H1 (cell line): ENCODE measurements at regions of chr1 and their contacts with region 1.

Region 1: GRCh38 chr1:22611530-22611947 is 24.9 kb upstream of the C1QA start:
- DNase-seq: peak; percentile 54 to 92
- H3K4me3 ChIP-seq: no peak overlapping the region
- H3K27ac ChIP-seq: no peak overlapping the region
- H3K4me1 ChIP-seq: peaks cover 0 to 6% (median 3%) of the 10 kb centered on the region in 4 experiments; a peak in 6 of 7 replicates
- H3K27me3 ChIP-seq: no peaks in the 10 kb centered on the region; a peak in 2 of 7 replicates
- CTCF ChIP-seq: no peak
- EP300 ChIP-seq: no peak
- POLR2A ChIP-seq: no peak
- RAD21 ChIP-seq: no peak; a peak in 1 of 4 replicates

Region 2: GRCh38 chr1:22621761-22622160 is 10.2 kb after region 1 on chr1:
- CTCF ChIA-PET with region 1: interaction called, 13 read pairs
- POLR2A ChIA-PET with region 1: interaction called, 6 read pairs
- DNase-seq: no peak
- H3K4me3 ChIP-seq: no peak overlapping the region
- H3K27ac ChIP-seq: no peak overlapping the region
- H3K4me1 ChIP-seq: peaks cover 0 to 15% (median 9%) of the 10 kb centered on the region in 4 experiments; a peak in 5 of 7 replicates
- H3K27me3 ChIP-seq: no peaks in the 10 kb centered on the region
- CTCF ChIP-seq: no peak
- EP300 ChIP-seq: no peak
- POLR2A ChIP-seq: no peak
- RAD21 ChIP-seq: peak in 1 of 2 experiments; percentile 9; a peak in 1 of 4 replicates

Region 3: DNA sequence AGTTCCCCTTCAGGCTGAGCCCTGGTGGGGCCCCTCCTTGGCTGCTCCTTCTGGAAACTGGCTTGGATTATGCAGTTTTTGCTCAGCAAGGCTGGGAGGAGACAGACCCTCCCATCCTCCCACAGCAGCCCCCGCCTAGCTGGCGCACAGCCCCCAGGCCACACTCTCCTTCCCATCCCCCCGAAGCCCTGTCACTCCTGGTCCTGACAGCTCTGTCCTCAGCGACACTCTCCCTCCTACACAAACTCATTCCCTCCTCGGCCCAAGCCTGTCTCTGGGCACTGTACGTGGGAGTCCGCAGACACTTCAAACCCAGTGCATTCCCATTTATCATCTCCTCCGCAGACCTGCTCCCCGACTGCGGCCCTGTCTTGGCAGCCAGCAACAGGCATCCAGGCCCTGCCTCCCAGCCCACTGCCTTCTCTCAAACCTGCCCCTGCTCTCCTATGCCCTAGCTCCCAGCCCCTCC is 74.1 kb after region 1 on chr1:
- CTCF ChIA-PET with region 1: no interaction called
- POLR2A ChIA-PET with region 1: no interaction called
- DNase-seq: no peak
- H3K4me3 ChIP-seq: no peak overlapping the region
- H3K27ac ChIP-seq: no peak overlapping the region
- H3K4me1 ChIP-seq: peaks cover 0 to 2% (median under 1%) of the 10 kb centered on the region in 4 experiments; a peak in 2 of 7 replicates
- H3K27me3 ChIP-seq: no peaks in the 10 kb centered on the region
- CTCF ChIP-seq: no peak
- EP300 ChIP-seq: no peak
- POLR2A ChIP-seq: no peak
- RAD21 ChIP-seq: no peak

Region 4: DNA sequence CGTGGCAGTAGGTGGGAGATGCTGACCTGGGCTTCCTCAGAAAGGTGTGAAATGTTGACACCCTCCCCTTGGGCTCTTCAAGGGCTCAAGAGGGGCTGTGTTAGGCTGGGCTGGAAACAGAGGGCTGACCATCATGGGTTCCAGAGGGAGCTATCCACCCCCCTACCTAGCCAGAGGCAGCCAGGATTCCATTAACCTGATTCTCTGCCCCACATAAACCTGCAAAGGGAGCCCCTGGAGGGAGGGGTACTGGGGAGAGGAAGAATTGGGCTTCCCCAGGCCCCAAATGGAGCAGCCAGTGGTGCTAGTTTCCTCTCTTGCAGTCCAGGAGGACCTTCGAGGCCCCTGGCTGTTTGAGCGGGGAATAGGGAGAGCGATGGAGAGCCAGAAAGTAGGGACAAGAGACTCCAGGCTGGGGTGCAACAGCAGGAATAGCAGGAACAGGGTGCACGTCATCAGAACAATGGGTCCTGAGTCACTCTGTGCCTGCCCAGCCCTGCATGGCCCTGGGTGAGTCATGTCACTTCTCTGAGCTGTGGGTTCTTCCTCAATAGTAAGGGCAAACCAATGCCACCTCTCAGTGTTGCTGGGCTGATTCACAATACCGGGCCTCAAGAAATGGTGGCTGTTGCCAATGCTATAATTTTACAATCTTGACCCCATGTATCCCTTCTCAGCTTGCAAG is 220.3 kb after region 1 on chr1:
- CTCF ChIA-PET with region 1: no interaction called
- POLR2A ChIA-PET with region 1: no interaction called
- DNase-seq: no peak
- H3K4me3 ChIP-seq: no peak overlapping the region
- H3K27ac ChIP-seq: no peak overlapping the region
- H3K4me1 ChIP-seq: peaks cover 5 to 13% (median 9%) of the 10 kb centered on the region in 4 experiments; a peak in 6 of 7 replicates
- H3K27me3 ChIP-seq: no peaks in the 10 kb centered on the region
- CTCF ChIP-seq: no peak
- EP300 ChIP-seq: no peak
- POLR2A ChIP-seq: no peak
- RAD21 ChIP-seq: no peak